ENCODE measurements at regions of chr12 and their contacts with region 1.

Region 1: DNA sequence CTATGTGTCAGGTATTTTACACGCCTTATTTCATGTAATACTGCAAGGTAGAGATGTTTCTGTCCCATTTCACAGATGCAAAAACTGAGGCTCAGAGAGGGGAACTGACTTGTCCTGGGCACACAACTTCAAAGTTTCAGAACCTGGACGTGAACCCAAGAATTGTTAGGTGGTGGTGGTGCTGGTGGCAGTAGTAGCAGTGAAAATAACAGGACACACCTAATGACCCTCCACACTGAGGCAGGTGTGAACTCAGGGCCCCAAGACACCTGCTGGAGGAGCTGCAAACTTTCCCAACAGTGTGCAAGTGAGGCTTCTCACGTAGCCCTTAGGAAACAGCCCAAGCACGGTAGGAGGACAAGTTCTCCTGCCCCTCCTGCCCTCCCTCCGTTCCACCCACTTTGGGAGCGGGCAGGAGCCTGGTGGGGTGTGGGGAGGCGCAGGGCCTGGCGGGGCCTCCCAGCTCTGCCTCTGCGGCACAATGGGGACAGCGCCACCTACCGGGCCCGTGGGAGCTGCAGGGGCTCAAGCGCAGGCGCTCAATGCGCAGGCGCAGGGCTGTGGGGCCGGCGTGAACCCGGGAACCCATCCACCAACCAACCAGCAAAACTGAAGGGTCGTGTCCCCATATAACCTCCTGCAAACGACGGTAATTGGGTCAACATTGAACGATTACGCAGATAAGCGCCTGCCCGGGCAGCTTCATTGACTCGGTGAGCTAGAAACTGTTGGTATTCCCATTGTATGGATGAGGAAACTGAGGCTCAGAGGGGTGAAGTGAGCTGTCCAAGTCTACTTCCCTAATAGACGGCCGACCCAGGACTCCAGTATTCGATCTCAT is 12.0 kb upstream of the TRPV4 start:
- DNase-seq: peak; percentile 91
- ATAC-seq: peak; percentile 96
- H3K4me3 Mint-ChIP-seq: peak overlapping the region; percentile 7
- H3K27ac Mint-ChIP-seq: no peak overlapping the region
- H3K4me1 Mint-ChIP-seq: peaks cover 10% of the 10 kb centered on the region
- H3K27me3 Mint-ChIP-seq: no peaks in the 10 kb centered on the region

Region 2: DNA sequence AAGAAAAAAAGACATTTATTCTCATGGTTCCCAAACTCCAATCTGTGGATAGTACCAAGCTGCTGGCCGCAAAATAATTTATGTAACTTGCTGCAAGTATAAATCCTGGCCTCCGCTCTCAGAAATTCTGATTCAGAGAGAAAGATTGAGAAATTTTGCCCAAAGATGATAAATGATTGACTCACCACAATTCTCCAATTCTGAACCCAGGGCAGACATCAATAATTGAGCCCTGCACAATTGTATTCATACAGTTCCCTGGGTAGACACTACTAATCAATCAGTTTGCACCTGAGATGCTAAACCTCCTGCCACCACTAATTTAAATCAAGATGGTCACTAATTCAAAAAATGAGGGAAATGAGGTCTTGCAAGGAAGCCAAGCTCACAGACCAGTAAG is 50.2 kb before region 1 on chr12:
- CTCF ChIA-PET with region 1: interaction called, 10 read pairs
- POLR2A ChIA-PET with region 1: no interaction called
- DNase-seq: no peak
- ATAC-seq: no peak
- H3K4me3 Mint-ChIP-seq: no peak overlapping the region
- H3K27ac Mint-ChIP-seq: no peak overlapping the region
- H3K4me1 Mint-ChIP-seq: no peaks in the 10 kb centered on the region
- H3K27me3 Mint-ChIP-seq: peaks cover 5% of the 10 kb centered on the region

Region 3: DNA sequence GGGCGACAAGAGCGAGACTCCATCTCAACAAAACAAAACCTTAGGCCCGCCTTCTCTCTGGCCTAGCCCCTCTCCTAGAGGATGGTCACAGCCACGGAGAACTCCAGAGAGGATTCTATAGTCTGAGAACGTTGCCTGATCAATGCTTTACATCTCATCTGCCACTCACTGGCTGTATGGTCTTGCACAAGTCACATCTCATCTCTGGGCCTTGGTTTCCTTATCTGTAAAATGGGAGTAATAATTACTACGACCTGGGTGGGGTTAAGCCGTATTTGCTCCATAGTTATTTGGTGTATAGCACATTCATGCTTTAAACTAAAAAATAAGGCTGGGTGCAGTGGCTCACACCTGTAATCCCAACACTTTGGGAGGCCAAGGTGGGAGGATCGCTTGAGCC is 20.5 kb before region 1 on chr12:
- CTCF ChIA-PET with region 1: interaction called, 43 read pairs
- POLR2A ChIA-PET with region 1: no interaction called
- DNase-seq: no peak
- ATAC-seq: no peak
- H3K4me3 Mint-ChIP-seq: no peak overlapping the region
- H3K27ac Mint-ChIP-seq: no peak overlapping the region
- H3K4me1 Mint-ChIP-seq: peaks cover 10% of the 10 kb centered on the region
- H3K27me3 Mint-ChIP-seq: no peaks in the 10 kb centered on the region

Region 4: DNA sequence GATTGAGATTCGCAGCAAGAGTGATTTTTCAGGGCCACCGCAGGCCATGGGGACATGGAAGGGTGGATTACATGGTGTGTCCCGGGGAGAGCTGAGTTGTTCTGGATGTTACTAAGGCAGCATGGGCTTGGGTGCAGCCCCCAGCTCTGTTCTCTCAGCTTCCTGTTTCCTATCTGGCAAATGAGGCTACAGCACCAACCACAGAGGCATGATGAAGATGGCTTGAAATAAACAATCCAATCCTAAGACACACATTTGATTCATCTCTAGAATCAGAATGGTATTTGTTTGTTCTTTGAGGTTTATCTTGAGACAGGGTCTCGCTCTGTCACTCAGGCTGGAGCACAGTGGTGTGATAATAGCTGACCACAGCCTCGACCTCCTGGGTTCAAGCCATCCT is 13.6 kb after region 1 on chr12:
- CTCF ChIA-PET with region 1: interaction called, 40 read pairs
- POLR2A ChIA-PET with region 1: no interaction called
- DNase-seq: no peak
- ATAC-seq: no peak
- H3K4me3 Mint-ChIP-seq: no peak overlapping the region
- H3K27ac Mint-ChIP-seq: peak overlapping the region; percentile 10
- H3K4me1 Mint-ChIP-seq: peaks cover 18% of the 10 kb centered on the region
- H3K27me3 Mint-ChIP-seq: no peaks in the 10 kb centered on the region

Region 5: DNA sequence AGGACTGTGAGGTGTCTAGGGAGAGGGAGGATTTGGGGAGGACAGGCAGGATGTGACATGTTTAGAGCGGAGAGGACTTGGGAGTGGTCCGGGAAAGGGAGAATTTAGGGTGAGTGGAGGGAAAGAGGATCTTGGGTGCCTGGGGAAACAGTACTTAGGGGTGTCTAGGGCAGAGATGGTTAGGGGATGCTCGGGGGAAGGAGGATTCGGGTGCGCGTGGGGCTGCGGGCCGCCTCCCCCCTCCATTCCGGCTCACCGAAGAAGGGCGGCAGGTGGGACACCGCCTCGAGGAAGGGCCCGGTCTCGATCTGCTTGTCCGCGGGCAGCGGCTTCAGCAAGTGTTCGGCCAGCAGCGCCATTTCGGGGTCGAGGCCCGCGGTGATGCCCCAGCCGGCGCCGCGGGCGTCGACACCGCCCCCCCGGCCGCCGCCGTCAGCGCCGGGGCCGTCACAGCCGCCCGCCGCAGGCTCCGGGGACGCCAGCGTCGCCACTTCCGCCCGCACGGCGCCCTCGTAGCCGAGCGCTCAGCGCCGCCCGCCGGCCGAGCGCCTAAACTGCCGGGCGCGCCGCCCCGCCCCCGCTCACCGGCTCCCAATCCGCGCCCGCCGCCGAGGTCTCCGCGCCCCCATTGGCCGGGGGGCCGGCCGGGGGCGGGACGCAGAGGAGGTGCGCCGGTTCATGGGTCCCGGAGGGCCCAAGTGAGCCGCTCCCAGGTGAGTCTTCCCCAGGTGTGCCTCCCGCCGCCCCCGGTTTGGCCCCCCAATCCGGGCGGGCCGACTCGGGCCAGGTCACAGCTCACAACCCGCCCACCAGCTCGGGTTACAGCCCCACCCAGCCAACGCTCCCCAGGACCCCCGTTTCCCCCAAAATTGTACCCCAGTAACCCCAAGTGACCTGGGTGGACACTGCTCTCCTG is 35.1 kb after region 1 on chr12 and contains the start of gene GLTP:
- CTCF ChIA-PET with region 1: interaction called, 15 read pairs
- POLR2A ChIA-PET with region 1: no interaction called
- DNase-seq: peak; percentile 88
- ATAC-seq: peak; percentile 98
- H3K4me3 Mint-ChIP-seq: peak within 1 kb of the TSS; percentile 86
- H3K27ac Mint-ChIP-seq: peak within 1 kb of the TSS; percentile 91
- H3K4me1 Mint-ChIP-seq: peaks cover 40% of the 10 kb centered on the region
- H3K27me3 Mint-ChIP-seq: peaks cover 20% of the 10 kb centered on the region
- total RNA-seq, gene GLTP: 19.9 to 20.9 TPM

Measured in activated CD8-positive, alpha-beta T cell treated with anti-CD3 and anti-CD28 coated beads, Interleukin-2, amount 10 ng/mL, durations not matched to agents 7 days and 5 days (primary cell).